GM12878 (cell line): ENCODE measurements at regions of chr16 and their contacts with region 1.

Region 1: DNA sequence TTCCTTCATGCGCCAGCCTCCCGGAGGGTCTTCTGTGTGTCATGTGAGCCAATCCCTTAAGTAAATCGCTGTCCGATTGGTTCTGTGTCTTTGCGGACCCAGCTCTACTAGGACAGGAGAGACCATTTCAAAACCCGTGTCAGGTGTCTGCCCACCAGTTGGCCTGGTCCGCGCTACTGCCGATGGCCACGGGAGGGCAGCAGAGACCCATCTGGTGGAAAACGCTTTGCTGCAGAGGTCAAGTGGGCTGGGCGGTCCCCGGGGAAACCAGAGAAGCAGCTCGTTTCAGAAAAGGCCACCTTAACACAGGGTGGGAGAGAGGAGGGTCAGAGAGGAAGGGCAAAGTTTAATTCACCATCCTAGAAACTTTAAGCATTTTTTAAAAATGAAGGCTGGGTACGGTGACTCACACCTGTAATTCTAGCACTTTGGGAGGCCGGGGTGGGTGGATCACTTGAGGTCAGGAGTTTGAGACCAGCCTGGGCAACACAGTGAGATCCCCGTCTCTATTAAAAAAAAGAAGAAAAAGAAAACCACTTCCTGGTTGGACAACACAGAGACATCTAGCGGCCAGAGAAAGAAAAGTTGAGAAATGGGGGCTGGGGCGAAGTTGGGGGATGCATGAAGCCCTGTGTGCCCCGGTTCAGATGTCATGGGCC is 2.8 kb upstream of the CIBAR2 start:
- DNase-seq: peak; percentile 56
- ATAC-seq: peak; percentile 95
- H3K4me3 ChIP-seq: no peak overlapping the region
- H3K27ac ChIP-seq: peak overlapping the region; percentile 42; the same call in 1 of the 2 replicates
- H3K4me1 ChIP-seq: peaks cover 2% of the 10 kb centered on the region; the same call in 1 of the 2 replicates
- H3K27me3 ChIP-seq: no peaks in the 10 kb centered on the region
- CTCF ChIP-seq: peak; percentile 98 to 99 (median 99)
- EP300 ChIP-seq: no peak
- POLR2A ChIP-seq: no peak
- RAD21 ChIP-seq: peak; percentile 99

Region 2: GRCh38 chr16:84868829-84869472 is 246.1 kb before region 1 on chr16:
- CTCF ChIA-PET with region 1: no interaction called
- POLR2A ChIA-PET with region 1: no interaction called
- RAD21 ChIA-PET with region 1: no interaction called
- SMC1A ChIA-PET with region 1: no interaction called
- in situ Hi-C with region 1: no loop called
- intact Hi-C with region 1: no loop called
- DNase-seq: no peak
- ATAC-seq: no peak
- H3K4me3 ChIP-seq: no peak overlapping the region
- H3K27ac ChIP-seq: no peak overlapping the region
- H3K4me1 ChIP-seq: no peaks in the 10 kb centered on the region
- H3K27me3 ChIP-seq: peaks cover 0 to 5% of the 10 kb centered on the region in 2 experiments; a peak in 2 of 4 replicates
- CTCF ChIP-seq: no peak
- EP300 ChIP-seq: no peak
- POLR2A ChIP-seq: no peak
- RAD21 ChIP-seq: no peak

Region 3: DNA sequence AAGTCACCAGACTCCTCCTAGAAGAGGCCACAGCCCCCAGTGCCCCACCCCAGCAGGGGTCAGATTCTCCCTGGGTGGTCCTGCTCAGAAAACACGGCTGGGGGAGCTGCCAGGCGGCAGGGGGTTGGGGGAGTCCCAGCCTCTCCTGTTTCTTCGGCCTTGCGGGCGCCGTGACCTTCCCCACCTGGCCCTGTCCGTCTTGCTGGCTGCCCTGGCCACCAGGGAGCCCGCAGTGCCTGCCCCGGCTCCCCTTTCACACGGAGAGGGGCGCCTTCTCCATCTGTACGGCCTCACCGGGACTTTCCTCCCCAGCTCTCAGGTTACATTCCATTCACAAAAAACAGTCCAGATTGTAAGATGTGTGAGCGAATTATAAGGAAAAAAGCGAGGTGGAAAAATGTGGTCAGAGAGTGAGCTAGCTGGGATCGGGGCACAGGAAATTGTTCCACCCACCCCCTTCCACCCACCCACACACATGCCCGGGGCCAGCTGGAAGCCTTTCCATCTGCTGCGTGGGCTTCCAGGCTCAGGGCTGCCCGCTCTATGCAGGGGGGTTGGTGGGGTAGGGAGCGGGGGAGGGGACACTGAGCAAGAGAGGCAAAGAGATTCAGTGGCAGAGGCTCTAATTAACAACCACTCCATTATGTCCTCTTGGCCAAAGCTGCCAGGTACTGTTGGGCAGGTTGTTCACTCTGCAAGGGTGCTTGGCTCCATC is 11.8 kb after region 1 on chr16:
- CTCF ChIA-PET with region 1: interaction called, 14 read pairs
- POLR2A ChIA-PET with region 1: interaction called, 5 read pairs
- RAD21 ChIA-PET with region 1: interaction called, 8 read pairs
- SMC1A ChIA-PET with region 1: interaction called, 5 read pairs
- in situ Hi-C with region 1: no loop called
- intact Hi-C with region 1: no loop called
- DNase-seq: no peak
- ATAC-seq: peak; percentile 41
- H3K4me3 ChIP-seq: no peak overlapping the region
- H3K27ac ChIP-seq: no peak overlapping the region
- H3K4me1 ChIP-seq: no peaks in the 10 kb centered on the region
- H3K27me3 ChIP-seq: no peaks in the 10 kb centered on the region
- CTCF ChIP-seq: no peak
- EP300 ChIP-seq: no peak
- POLR2A ChIP-seq: no peak
- RAD21 ChIP-seq: no peak

Region 4: GRCh38 chr16:85187002-85187401 is 72.0 kb after region 1 on chr16:
- CTCF ChIA-PET with region 1: no interaction called
- POLR2A ChIA-PET with region 1: no interaction called
- RAD21 ChIA-PET with region 1: no interaction called
- SMC1A ChIA-PET with region 1: no interaction called
- in situ Hi-C with region 1: no loop called
- intact Hi-C with region 1: no loop called
- DNase-seq: no peak
- ATAC-seq: no peak
- H3K4me3 ChIP-seq: no peak overlapping the region
- H3K27ac ChIP-seq: no peak overlapping the region
- H3K4me1 ChIP-seq: no peaks in the 10 kb centered on the region
- H3K27me3 ChIP-seq: no peaks in the 10 kb centered on the region
- CTCF ChIP-seq: no peak
- EP300 ChIP-seq: no peak
- POLR2A ChIP-seq: no peak
- RAD21 ChIP-seq: no peak

Region 5: GRCh38 chr16:85227084-85227945 is 112.3 kb after region 1 on chr16:
- CTCF ChIA-PET with region 1: interaction called, 7 read pairs
- POLR2A ChIA-PET with region 1: interaction called, 4 read pairs
- RAD21 ChIA-PET with region 1: interaction called, 10 read pairs
- SMC1A ChIA-PET with region 1: interaction called, 6 read pairs
- in situ Hi-C with region 1: no loop called
- intact Hi-C with region 1: loop called (anchors 1 kb)
- DNase-seq: peak; percentile 98
- ATAC-seq: peak; percentile 86
- H3K4me3 ChIP-seq: peak overlapping the region; percentile 55
- H3K27ac ChIP-seq: peak overlapping the region; percentile 98
- H3K4me1 ChIP-seq: peaks cover 56% of the 10 kb centered on the region
- H3K27me3 ChIP-seq: no peaks in the 10 kb centered on the region
- CTCF ChIP-seq: no peak
- EP300 ChIP-seq: peak; percentile 87 to 95
- POLR2A ChIP-seq: peak; percentile 76
- RAD21 ChIP-seq: 0 out of 2 replicates have a peak, but pooled peaks have one; percentile 14

Region 6: DNA sequence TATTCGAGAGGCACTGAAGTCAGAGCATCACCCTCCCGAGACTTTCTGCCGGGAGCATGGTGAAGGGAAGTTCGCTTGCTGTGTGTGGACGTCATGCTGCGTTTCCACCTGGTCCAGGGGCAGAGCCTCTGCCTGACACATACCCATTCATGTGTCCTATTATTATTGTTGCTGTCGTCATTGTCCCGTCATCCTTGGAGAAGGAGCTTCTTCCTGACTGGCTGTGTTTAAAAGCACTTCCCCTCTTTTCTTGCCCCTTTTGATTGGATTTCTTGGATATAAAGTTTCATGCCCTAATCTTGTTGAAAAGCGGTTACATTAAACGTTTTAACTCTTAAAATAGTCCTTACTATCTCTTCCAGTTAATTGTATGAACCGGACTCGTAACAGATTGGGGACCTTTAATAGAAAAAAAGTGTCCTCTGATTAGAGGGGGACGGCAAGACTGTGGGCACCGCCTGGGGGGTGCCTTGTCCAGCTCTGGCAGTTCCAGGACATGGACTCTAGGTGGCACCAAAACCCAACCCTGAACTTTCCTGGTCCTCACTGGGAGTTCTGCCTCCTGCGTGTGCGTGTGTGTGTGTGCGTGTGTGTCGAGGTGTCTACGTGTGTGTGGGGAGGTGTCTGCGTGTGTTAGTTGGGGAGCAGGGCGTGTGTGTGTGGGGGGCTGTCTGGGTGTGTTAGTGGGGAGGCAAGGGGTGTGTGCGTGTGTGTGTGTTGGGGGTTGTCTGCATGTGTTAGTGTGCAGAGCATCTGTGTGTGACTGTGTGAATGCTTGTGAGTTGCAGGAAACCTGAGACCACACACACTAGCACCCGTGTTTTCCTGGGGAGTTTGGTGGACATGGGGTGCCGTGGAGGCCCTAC is 130.5 kb after region 1 on chr16:
- CTCF ChIA-PET with region 1: interaction called, 26 read pairs
- POLR2A ChIA-PET with region 1: no interaction called
- RAD21 ChIA-PET with region 1: interaction called, 7 read pairs
- SMC1A ChIA-PET with region 1: interaction called, 6 read pairs
- in situ Hi-C with region 1: no loop called
- intact Hi-C with region 1: loop called (anchors 5 kb)
- DNase-seq: no peak
- ATAC-seq: peak; percentile 85
- H3K4me3 ChIP-seq: no peak overlapping the region
- H3K27ac ChIP-seq: no peak overlapping the region
- H3K4me1 ChIP-seq: no peaks in the 10 kb centered on the region
- H3K27me3 ChIP-seq: no peaks in the 10 kb centered on the region
- CTCF ChIP-seq: peak; percentile 87 to 93 (median 90)
- EP300 ChIP-seq: no peak
- POLR2A ChIP-seq: no peak
- RAD21 ChIP-seq: peak; percentile 71

Region 7: GRCh38 chr16:85275533-85276249 is 160.7 kb after region 1 on chr16:
- CTCF ChIA-PET with region 1: interaction called, 11 read pairs
- POLR2A ChIA-PET with region 1: no interaction called
- RAD21 ChIA-PET with region 1: no interaction called
- SMC1A ChIA-PET with region 1: no interaction called
- in situ Hi-C with region 1: no loop called
- intact Hi-C with region 1: loop called (anchors 10 kb)
- DNase-seq: no peak
- ATAC-seq: peak; percentile 97
- H3K4me3 ChIP-seq: no peak overlapping the region
- H3K27ac ChIP-seq: no peak overlapping the region
- H3K4me1 ChIP-seq: no peaks in the 10 kb centered on the region
- H3K27me3 ChIP-seq: peaks cover 0 to 3% of the 10 kb centered on the region in 2 experiments; a peak in 1 of 4 replicates
- CTCF ChIP-seq: peak; percentile 87 to 97 (median 92)
- EP300 ChIP-seq: no peak
- POLR2A ChIP-seq: no peak
- RAD21 ChIP-seq: peak; percentile 85

Region 8: DNA sequence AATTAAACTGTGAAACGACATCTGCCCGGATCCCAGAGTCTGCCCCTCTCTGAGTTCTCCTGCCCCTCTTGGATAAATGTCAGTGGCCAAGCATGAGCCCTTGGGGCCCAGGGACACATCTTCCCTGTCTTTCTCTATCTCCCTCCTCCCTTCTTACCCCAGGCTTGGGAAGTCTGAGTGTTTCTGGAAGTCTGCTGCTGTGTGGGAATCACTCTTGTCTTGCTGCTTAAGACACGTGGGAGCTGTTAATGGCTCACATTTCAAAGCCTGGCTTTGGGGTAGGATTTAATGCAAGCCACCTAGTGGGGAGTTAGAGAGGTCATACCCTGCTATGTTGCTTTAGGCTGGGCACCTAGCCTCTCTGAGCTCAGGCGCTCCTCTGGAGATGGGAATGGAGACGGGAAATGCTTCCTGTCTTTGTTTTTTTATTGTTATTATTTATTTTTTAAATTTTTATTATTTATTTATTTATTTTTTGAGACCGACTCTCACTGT is 215.7 kb after region 1 on chr16:
- CTCF ChIA-PET with region 1: interaction called, 3 read pairs
- POLR2A ChIA-PET with region 1: no interaction called
- RAD21 ChIA-PET with region 1: interaction called, 5 read pairs
- SMC1A ChIA-PET with region 1: no interaction called
- in situ Hi-C with region 1: no loop called
- intact Hi-C with region 1: loop called (anchors 10 kb)
- DNase-seq: no peak
- ATAC-seq: peak; percentile 87
- H3K4me3 ChIP-seq: no peak overlapping the region
- H3K27ac ChIP-seq: no peak overlapping the region
- H3K4me1 ChIP-seq: no peaks in the 10 kb centered on the region
- H3K27me3 ChIP-seq: peaks cover 0 to 15% of the 10 kb centered on the region in 2 experiments; a peak in 3 of 4 replicates
- CTCF ChIP-seq: peak; percentile 37 to 48 (median 38)
- EP300 ChIP-seq: no peak
- POLR2A ChIP-seq: no peak
- RAD21 ChIP-seq: peak; percentile 48

Region 9: DNA sequence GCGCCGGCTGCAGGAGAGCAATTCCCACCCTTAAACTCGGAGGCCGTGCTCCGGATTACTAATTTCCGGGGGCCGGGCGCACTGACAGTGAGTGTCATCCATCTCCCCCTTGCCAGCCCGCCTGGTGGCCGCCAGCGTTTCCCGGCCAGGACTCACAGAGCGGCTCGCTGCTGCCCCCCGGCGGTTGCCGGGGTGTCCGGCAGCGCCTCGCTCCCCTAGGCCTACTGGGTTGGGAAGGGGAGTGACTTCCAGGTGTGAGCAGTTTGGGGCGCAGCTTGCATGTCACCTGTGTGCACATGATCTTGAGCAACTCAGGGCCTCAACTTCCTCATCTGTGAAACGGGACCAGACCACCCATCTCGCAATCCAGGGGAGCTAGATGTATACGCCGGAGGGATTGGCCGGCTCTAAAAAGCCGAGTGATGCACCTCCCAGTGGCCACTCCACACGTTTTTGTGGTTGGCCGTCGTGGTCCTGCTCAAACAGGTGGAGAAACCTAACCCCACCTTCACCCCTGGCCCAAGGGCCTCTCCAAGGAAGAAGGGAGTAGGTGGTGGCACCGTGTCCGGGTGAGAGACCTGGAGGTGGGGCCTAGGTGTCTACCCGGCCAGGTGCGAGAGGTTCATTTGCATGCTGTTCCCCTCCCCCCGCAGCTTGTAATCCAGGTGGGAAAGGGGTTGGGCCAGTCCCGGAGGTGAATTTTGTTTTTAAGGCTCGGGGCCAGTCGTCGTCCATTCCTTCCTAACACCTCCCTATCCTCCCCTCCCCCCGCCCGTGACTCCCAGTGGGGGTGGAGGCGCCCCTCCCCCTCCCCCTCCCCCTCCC is 495.7 kb after region 1 on chr16:
- CTCF ChIA-PET with region 1: no interaction called
- POLR2A ChIA-PET with region 1: no interaction called
- RAD21 ChIA-PET with region 1: no interaction called
- SMC1A ChIA-PET with region 1: interaction called, 4 read pairs
- in situ Hi-C with region 1: no loop called
- intact Hi-C with region 1: loop called (anchors 1 kb)
- DNase-seq: no peak
- ATAC-seq: peak; percentile 70
- H3K4me3 ChIP-seq: peak overlapping the region; percentile 70; the same call in 1 of the 2 replicates
- H3K27ac ChIP-seq: no peak overlapping the region
- H3K4me1 ChIP-seq: peaks cover 35% of the 10 kb centered on the region
- H3K27me3 ChIP-seq: no peaks in the 10 kb centered on the region
- CTCF ChIP-seq: peak; percentile 96 to 99 (median 97)
- EP300 ChIP-seq: no peak
- POLR2A ChIP-seq: no peak
- RAD21 ChIP-seq: peak; percentile 93